ENCODE measurements at regions of chr4 and their contacts with region 1.

Region 1: GRCh38 chr4:8607603-8608481 is 15.3 kb downstream of the CPZ start:
- DNase-seq: no peak
- H3K4me3 Mint-ChIP-seq: no peak overlapping the region
- H3K27ac Mint-ChIP-seq: no peak overlapping the region
- H3K4me1 Mint-ChIP-seq: peaks cover 5% of the 10 kb centered on the region
- H3K27me3 Mint-ChIP-seq: peaks cover 19% of the 10 kb centered on the region
- CTCF ChIP-seq: peak; percentile 98

Region 2: DNA sequence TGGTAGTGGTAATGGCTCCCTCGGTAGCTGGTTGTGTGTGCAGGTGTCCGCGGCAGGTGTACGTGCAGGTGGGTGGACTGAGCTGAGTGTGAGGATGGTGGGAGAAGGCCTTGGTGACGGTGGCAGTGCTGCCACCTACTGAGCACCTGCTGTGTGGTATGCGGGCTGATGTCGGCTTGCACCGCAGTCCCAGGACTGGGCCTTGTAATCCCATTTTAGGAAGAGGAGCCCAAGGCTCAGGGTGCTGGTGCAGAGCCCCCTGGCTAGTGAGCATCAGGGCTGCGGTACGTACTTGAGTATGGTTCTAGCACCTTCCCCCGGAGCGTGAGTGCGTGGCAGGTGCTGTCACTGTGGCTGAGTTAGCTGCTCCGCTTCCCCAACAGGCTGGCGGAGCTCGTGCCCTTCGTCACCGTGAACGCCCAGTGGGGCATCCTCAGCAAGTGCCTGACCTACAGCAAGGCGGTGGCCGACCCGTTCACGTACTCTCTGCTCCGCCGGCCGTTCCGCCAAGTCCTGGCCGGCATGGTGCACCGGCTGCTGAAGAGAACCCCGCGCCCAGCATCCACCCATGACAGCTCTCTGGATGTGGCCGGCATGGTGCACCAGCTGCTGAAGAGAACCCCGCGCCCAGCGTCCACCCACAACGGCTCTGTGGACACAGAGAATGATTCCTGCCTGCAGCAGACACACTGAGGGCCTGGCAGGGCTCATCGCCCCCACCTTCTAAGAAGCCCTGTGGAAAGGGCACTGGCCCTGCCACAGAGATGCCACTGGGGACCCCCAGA is 21.0 kb before region 1 on chr4:
- CTCF ChIA-PET with region 1: interaction called, 13 read pairs
- POLR2A ChIA-PET with region 1: no interaction called
- intact Hi-C with region 1: no loop called
- DNase-seq: no peak
- H3K4me3 Mint-ChIP-seq: no peak overlapping the region
- H3K27ac Mint-ChIP-seq: no peak overlapping the region
- H3K4me1 Mint-ChIP-seq: no peaks in the 10 kb centered on the region
- H3K27me3 Mint-ChIP-seq: peaks cover 55% of the 10 kb centered on the region
- CTCF ChIP-seq: peak; percentile 26

Region 3: GRCh38 chr4:8854931-8855330 is 247.1 kb after region 1 on chr4:
- CTCF ChIA-PET with region 1: interaction called, 13 read pairs
- POLR2A ChIA-PET with region 1: no interaction called
- intact Hi-C with region 1: no loop called
- DNase-seq: peak; percentile 26
- H3K4me3 Mint-ChIP-seq: no peak overlapping the region
- H3K27ac Mint-ChIP-seq: no peak overlapping the region
- H3K4me1 Mint-ChIP-seq: no peaks in the 10 kb centered on the region
- H3K27me3 Mint-ChIP-seq: peaks cover 13% of the 10 kb centered on the region
- CTCF ChIP-seq: no peak

Region 4: DNA sequence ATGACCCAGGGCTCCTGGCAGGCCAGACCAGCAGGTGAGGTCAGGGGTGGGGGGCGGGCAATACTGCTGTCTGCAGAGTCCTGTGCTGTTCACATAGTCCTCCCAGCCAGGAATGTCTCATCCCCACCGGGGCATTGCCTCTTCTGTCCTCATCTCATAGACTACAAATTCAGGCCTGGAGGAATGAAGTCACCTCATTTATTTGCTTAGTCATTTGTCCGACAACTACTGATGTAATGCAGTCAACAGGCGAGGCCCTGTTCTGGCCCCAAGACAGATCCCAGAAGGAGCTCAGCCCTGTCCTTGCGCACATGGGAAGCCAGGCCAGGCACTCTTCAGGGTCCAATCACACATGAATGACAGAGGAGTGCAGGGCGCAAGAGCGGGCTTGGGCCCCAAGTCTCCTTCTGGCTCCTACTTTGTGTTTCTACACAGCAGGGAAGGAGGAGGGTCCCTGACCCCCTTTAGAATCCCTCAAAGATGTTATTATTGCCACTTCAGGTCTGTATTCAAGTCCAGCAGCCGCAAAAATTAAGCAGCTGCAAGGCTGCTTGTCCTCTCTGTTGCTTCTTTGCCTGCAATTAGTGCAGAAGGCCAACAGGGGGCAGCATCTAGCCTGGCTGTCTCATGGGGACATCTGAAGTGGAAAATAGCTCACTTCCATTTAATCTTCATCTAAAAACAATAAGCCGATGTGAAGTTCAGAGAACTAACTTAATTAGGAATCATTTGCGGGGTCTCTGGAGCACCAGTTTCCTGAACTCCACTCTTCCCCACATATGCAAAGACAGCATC is 279.0 kb after region 1 on chr4:
- CTCF ChIA-PET with region 1: interaction called, 49 read pairs
- POLR2A ChIA-PET with region 1: no interaction called
- intact Hi-C with region 1: no loop called
- DNase-seq: peak; percentile 5
- H3K4me3 Mint-ChIP-seq: no peak overlapping the region
- H3K27ac Mint-ChIP-seq: no peak overlapping the region
- H3K4me1 Mint-ChIP-seq: no peaks in the 10 kb centered on the region
- H3K27me3 Mint-ChIP-seq: no peaks in the 10 kb centered on the region
- CTCF ChIP-seq: peak; percentile 37

Region 5: DNA sequence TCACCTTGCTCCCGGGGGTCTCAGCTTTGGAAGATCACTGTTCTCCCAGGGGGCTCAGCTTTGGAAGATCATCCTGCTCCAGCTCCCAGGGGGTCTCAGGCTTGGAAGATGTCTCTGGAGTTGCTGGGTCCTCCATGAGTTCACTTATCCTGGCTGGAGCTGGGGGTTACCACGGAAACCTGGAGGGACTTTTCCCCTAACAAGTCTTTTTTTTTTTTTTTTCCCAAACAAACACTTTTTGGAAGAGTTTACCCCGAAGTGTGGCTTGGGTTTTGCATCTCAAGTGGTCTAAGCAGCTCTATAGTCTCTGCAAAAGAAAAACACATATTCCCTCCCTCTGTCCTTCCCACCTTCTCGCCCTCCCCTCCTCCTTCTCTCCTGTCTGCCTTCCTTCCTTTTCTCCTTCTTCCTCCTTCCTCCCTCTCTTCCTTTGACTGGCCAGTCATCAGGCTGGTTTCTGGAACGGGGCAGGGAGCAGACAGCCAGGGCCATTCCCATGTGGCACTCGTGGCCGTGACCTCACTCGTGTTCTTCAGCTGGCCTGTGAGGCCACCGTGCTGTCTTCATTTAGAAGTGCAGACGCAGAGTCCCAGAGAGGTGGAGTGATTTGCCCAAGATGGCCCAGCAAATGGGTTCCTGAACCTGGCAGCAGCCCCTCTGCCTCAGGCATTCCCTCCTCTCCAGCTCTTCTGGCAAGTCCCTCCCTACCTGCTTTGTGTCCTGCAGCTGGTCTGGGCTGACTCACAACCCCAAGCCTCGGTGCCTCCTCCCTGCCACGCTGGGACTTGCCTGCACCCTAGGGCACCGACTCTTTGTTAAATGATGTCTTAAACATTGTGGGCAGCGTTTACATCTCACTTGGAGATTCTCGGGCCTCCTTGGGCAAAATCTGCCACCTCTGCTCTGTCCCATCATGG is 289.7 kb after region 1 on chr4:
- CTCF ChIA-PET with region 1: interaction called, 11 read pairs
- POLR2A ChIA-PET with region 1: no interaction called
- intact Hi-C with region 1: no loop called
- DNase-seq: peak; percentile 68
- H3K4me3 Mint-ChIP-seq: no peak overlapping the region
- H3K27ac Mint-ChIP-seq: no peak overlapping the region
- H3K4me1 Mint-ChIP-seq: no peaks in the 10 kb centered on the region
- H3K27me3 Mint-ChIP-seq: no peaks in the 10 kb centered on the region
- CTCF ChIP-seq: no peak

Region 6: GRCh38 chr4:8917868-8918783 is 310.3 kb after region 1 on chr4:
- CTCF ChIA-PET with region 1: interaction called, 102 read pairs
- POLR2A ChIA-PET with region 1: no interaction called
- intact Hi-C with region 1: loop called (anchors 10 kb)
- DNase-seq: peak; percentile 56
- H3K4me3 Mint-ChIP-seq: no peak overlapping the region
- H3K27ac Mint-ChIP-seq: no peak overlapping the region
- H3K4me1 Mint-ChIP-seq: no peaks in the 10 kb centered on the region
- H3K27me3 Mint-ChIP-seq: peaks cover 31% of the 10 kb centered on the region
- CTCF ChIP-seq: peak; percentile 92

Measured in MCF 10A (cell line).